AG04449 (cell line): ENCODE measurements at regions of chr12 and their contacts with region 1.

Region 1: GRCh38 chr12:101839324-101840283 is 8.8 kb upstream of the GNPTAB start:
- DNase-seq: no peak
- H3K4me3 ChIP-seq: no peak overlapping the region
- CTCF ChIP-seq: peak; percentile 82

Region 2: DNA sequence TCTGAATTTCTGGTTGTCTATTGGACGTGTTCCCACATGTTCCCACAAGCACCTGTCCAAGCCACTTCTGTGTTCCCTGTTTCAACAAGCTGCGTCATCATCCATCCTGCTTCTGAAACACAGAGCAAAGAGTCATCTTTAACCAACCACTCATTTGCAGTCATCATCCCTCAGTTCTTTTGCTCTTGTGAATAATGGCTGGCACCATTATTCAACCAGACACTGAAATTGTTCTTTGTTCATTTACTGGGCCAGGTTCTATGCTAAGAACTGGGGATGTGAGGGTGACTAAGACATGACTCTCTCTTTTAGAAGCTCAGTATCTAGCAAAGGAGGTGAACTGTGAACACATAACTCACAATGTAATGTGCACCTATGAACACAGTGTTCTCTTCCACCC is 1085.8 kb before region 1 on chr12:
- CTCF ChIA-PET with region 1: no interaction called
- POLR2A ChIA-PET with region 1: no interaction called
- DNase-seq: no peak
- H3K4me3 ChIP-seq: no peak overlapping the region
- CTCF ChIP-seq: no peak

Region 3: GRCh38 chr12:101439236-101439635 is 400.4 kb before region 1 on chr12:
- CTCF ChIA-PET with region 1: no interaction called
- POLR2A ChIA-PET with region 1: no interaction called
- DNase-seq: no peak
- H3K4me3 ChIP-seq: no peak overlapping the region
- CTCF ChIP-seq: no peak

Region 4: GRCh38 chr12:101773650-101774162 is 65.9 kb before region 1 on chr12:
- CTCF ChIA-PET with region 1: interaction called, 124 read pairs
- POLR2A ChIA-PET with region 1: no interaction called
- DNase-seq: peak; percentile 16
- H3K4me3 ChIP-seq: no peak overlapping the region
- CTCF ChIP-seq: peak; percentile 79

Region 5: GRCh38 chr12:101792051-101792931 is 47.3 kb before region 1 on chr12:
- CTCF ChIA-PET with region 1: interaction called, 12 read pairs
- POLR2A ChIA-PET with region 1: no interaction called
- DNase-seq: no peak
- H3K4me3 ChIP-seq: no peak overlapping the region
- CTCF ChIP-seq: no peak

Region 6: GRCh38 chr12:101850199-101850598 is 10.6 kb after region 1 on chr12:
- CTCF ChIA-PET with region 1: interaction called, 33 read pairs
- POLR2A ChIA-PET with region 1: no interaction called
- DNase-seq: no peak
- H3K4me3 ChIP-seq: no peak overlapping the region
- CTCF ChIP-seq: no peak

Region 7: DNA sequence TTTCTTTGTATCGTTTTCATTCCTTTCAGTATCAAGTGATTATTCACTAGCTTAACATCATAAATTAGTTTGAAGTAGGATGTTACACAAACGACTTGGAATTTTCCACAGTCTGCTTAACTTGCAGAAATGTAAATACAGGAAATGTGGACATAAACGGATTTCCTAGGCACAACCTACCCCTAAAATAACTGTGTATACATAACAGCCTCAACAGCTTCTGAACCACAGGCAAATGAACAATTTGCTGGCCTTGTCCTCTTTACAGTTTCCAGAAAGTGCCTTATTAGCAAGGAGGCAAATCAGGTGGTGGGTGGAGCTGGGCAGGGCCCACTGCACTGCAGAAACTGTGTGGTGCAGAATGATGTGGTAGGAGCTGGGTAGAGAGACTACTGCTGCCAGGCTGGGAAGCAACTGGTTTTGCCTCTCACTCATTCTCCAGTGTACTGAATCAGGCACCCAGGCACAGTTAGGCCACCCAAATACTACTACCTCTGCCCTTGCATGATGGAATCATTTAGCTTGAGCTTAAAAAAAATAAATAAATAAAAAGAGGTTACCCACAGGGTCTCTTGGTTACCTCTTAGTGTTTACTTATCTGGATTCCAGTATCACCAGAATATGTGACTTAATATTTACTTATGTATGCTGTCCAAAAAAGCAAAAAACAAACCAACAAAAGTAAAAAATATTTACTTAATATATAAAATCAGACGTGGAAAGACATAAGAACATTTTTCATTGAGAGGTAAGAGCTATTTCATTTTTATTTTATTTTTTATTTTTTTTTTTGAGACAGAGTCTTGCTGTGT is 52.1 kb after region 1 on chr12:
- CTCF ChIA-PET with region 1: interaction called, 33 read pairs
- POLR2A ChIA-PET with region 1: no interaction called
- DNase-seq: peak; percentile 82
- H3K4me3 ChIP-seq: no peak overlapping the region
- CTCF ChIP-seq: no peak